ENCODE measurements at regions of chr11 and their contacts with region 1.

Region 1: GRCh38 chr11:17063171-17064002 is 14.1 kb downstream of the RPS13 start:
- DNase-seq: peak; percentile 54
- H3K4me3 ChIP-seq: no peak overlapping the region
- H3K27ac ChIP-seq: no peak overlapping the region
- H3K4me1 ChIP-seq: no peaks in the 10 kb centered on the region
- H3K27me3 ChIP-seq: no peaks in the 10 kb centered on the region
- CTCF ChIP-seq: peak; percentile 73

Region 2: GRCh38 chr11:16148301-16148931 is 915.0 kb before region 1 on chr11:
- CTCF ChIA-PET with region 1: no interaction called
- POLR2A ChIA-PET with region 1: no interaction called
- intact Hi-C with region 1: no loop called
- DNase-seq: peak; percentile 82
- H3K4me3 ChIP-seq: no peak overlapping the region
- H3K27ac ChIP-seq: peak overlapping the region; percentile 52
- H3K4me1 ChIP-seq: peaks cover 51% of the 10 kb centered on the region
- H3K27me3 ChIP-seq: no peaks in the 10 kb centered on the region
- CTCF ChIP-seq: no peak

Region 3: DNA sequence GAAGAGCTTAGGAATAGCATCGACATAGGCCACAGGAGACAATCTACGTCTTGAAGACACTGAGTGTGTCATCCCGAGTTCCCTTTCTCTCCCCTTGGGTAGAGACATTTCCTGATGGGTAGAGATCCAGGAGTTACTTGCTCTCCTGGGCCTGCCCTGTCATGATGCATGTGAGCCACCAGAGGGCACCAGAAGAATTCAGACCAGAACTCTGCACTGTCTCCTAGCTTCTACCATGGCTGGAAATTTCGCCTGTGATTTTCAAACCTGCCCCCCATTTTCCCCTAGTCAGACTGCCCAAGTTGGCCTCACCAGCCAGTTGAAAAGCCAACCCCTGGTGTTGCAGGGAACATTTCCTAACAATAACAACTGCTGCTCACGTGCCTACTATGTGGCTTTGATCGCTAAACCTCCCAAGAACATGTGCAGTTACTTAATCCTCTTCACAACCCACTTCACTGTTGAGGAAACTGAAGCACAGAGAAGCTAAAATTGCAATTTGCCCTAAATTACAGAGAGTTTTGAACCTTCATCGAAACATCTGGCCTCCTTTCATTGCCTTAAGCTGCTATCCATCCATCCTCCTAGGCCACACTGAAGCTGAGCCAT is 277.8 kb before region 1 on chr11:
- CTCF ChIA-PET with region 1: interaction called, 11 read pairs
- POLR2A ChIA-PET with region 1: no interaction called
- intact Hi-C with region 1: loop called (anchors 2 kb)
- DNase-seq: peak; percentile 72
- H3K4me3 ChIP-seq: no peak overlapping the region
- H3K27ac ChIP-seq: no peak overlapping the region
- H3K4me1 ChIP-seq: no peaks in the 10 kb centered on the region
- H3K27me3 ChIP-seq: no peaks in the 10 kb centered on the region
- CTCF ChIP-seq: peak; percentile 80

Region 4: DNA sequence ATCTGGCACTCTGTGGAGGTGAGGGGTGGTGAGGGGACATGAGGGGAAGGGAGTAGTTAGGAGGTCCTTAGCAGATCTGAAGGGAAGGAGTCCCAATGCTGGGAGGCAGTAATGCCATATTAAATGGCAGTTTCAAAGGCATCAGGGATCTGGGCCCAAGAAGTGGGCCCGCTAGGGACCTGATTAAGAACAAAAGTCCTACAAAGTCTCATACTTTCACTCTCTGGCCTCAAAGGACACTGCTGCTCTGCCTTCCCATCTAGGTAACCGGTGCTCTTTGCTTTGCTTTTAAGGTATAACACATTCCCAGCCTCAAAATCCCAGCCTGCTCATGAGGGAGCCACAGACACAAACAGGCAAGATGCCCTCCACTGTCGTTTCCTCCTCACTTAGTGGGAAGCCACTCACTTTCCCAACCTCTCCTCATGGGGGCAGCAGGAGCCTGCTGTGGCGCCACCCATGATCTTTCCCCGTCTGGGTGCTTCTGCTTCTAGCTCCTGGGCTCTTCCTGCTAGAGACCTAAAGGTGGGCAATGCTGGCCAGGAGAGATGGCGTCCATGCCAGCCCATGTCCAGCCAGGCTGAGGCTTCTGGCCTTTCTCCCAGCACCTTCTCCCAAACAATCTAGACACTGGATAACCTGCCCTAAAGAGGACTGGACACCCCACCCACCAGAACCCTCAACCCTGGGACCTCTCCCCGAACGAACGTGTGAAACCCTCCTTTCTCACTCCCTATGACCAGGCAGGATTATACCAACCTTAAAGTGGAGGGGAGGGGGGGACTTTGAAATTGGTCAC is 117.5 kb before region 1 on chr11:
- CTCF ChIA-PET with region 1: interaction called, 5 read pairs
- POLR2A ChIA-PET with region 1: no interaction called
- intact Hi-C with region 1: loop called (anchors 2 kb)
- DNase-seq: peak; percentile 53
- H3K4me3 ChIP-seq: no peak overlapping the region
- H3K27ac ChIP-seq: no peak overlapping the region
- H3K4me1 ChIP-seq: no peaks in the 10 kb centered on the region
- H3K27me3 ChIP-seq: no peaks in the 10 kb centered on the region
- CTCF ChIP-seq: peak; percentile 68

Measured in A673 (cell line).